CD8-positive, alpha-beta T cell (primary cell): ENCODE measurements at regions of chr1 and their contacts with region 1.

Region 1: GRCh38 chr1:8026153-8026975 is at the start of gene ERRFI1:
- DNase-seq: peak; percentile 74 to 93 (median 85)
- ATAC-seq: peak; percentile 90
- H3K4me3 ChIP-seq: peak within 1 kb of the TSS; percentile 45 to 55
- H3K4me3 Mint-ChIP-seq: peak within 1 kb of the TSS; percentile 84
- H3K27ac ChIP-seq: no peak within 1 kb of the TSS
- H3K27ac Mint-ChIP-seq: peak within 1 kb of the TSS; percentile 5
- H3K4me1 ChIP-seq: peaks cover 13% of the 10 kb centered on the region
- H3K4me1 Mint-ChIP-seq: peaks cover 12% of the 10 kb centered on the region
- H3K27me3 ChIP-seq: no peaks in the 10 kb centered on the region
- H3K27me3 Mint-ChIP-seq: peaks cover 11% of the 10 kb centered on the region
- CTCF ChIP-seq: no peak
- total RNA-seq, gene ERRFI1: 4.4 to 4.9 TPM

Region 2: GRCh38 chr1:8154621-8155052 is 128.3 kb after region 1 on chr1:
- CTCF ChIA-PET with region 1: interaction called, 3 read pairs
- POLR2A ChIA-PET with region 1: no interaction called
- intact Hi-C with region 1: loop called (anchors 5 kb)
- DNase-seq: no peak
- ATAC-seq: no peak
- H3K4me3 ChIP-seq: no peak overlapping the region
- H3K4me3 Mint-ChIP-seq: no peak overlapping the region
- H3K27ac ChIP-seq: no peak overlapping the region
- H3K27ac Mint-ChIP-seq: no peak overlapping the region
- H3K4me1 ChIP-seq: peaks cover 44% of the 10 kb centered on the region
- H3K4me1 Mint-ChIP-seq: peaks cover 45% of the 10 kb centered on the region
- H3K27me3 ChIP-seq: no peaks in the 10 kb centered on the region
- H3K27me3 Mint-ChIP-seq: peaks cover 4% of the 10 kb centered on the region
- CTCF ChIP-seq: no peak

Region 3: GRCh38 chr1:8164670-8165069 is 138.3 kb after region 1 on chr1:
- CTCF ChIA-PET with region 1: no interaction called
- POLR2A ChIA-PET with region 1: no interaction called
- intact Hi-C with region 1: no loop called
- DNase-seq: no peak
- ATAC-seq: no peak
- H3K4me3 ChIP-seq: no peak overlapping the region
- H3K4me3 Mint-ChIP-seq: no peak overlapping the region
- H3K27ac ChIP-seq: no peak overlapping the region
- H3K27ac Mint-ChIP-seq: no peak overlapping the region
- H3K4me1 ChIP-seq: peaks cover 22% of the 10 kb centered on the region
- H3K4me1 Mint-ChIP-seq: peaks cover 30% of the 10 kb centered on the region
- H3K27me3 ChIP-seq: no peaks in the 10 kb centered on the region
- H3K27me3 Mint-ChIP-seq: peaks cover 3% of the 10 kb centered on the region
- CTCF ChIP-seq: no peak

Region 4: GRCh38 chr1:8238851-8239305 is 212.5 kb after region 1 on chr1:
- CTCF ChIA-PET with region 1: interaction called, 10 read pairs
- POLR2A ChIA-PET with region 1: no interaction called
- intact Hi-C with region 1: no loop called
- DNase-seq: no peak
- ATAC-seq: no peak
- H3K4me3 ChIP-seq: no peak overlapping the region
- H3K4me3 Mint-ChIP-seq: no peak overlapping the region
- H3K27ac ChIP-seq: no peak overlapping the region
- H3K27ac Mint-ChIP-seq: no peak overlapping the region
- H3K4me1 ChIP-seq: peaks cover 3% of the 10 kb centered on the region
- H3K4me1 Mint-ChIP-seq: peaks cover 4% of the 10 kb centered on the region
- H3K27me3 ChIP-seq: no peaks in the 10 kb centered on the region
- H3K27me3 Mint-ChIP-seq: peaks cover 17% of the 10 kb centered on the region
- CTCF ChIP-seq: no peak

Region 5: DNA sequence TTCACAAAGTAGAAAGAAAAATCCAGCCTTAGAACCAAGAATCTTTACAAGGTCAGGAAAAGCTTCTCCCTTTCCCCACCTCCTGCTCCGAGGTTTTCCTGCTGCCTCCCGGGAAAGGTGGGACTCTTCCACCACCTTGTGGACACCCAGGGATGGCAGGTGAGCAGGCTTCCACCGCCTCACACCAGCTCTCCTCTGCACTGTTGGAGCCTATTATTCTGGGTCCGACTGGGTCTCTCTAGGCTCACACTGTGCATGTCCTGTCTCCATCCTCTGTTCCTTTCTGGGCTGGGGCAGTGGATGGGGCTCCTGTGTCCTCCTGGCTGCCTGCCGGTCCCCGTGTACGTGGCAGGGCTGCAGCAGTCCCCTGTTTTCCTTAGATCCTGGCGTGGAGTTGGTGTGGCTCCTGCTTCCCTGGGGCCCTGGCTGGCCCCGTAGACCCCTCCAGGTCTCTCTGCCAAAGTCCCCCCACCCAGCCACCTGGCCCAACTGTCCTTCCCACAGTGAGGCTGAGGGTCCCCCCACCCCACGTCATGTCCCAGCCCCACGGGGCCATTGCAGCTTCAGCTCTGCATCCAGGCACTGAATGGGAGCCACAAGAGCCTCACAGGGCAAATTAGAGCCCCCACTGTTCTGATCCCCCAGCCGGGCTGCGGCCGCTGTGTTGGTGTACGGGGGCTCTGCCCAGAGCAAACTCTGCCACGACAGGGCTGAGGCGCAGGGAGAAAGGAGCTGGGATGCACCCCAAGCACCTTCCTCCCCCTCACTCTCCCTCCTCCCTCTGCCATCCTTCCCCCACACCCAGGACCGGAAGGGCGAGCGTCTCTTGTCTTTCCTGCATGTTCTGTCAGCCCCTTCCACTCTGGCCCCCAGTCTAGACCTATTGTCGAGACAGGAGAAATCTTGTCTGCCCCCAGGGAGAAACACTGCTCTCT is 288.2 kb after region 1 on chr1:
- CTCF ChIA-PET with region 1: interaction called, 92 read pairs
- POLR2A ChIA-PET with region 1: no interaction called
- intact Hi-C with region 1: loop called (anchors 1 kb)
- DNase-seq: peak in 8 of 9 experiments; percentile 14 to 73 (median 53)
- ATAC-seq: no peak
- H3K4me3 ChIP-seq: no peak overlapping the region
- H3K4me3 Mint-ChIP-seq: no peak overlapping the region
- H3K27ac ChIP-seq: no peak overlapping the region
- H3K27ac Mint-ChIP-seq: no peak overlapping the region
- H3K4me1 ChIP-seq: peaks cover 20% of the 10 kb centered on the region
- H3K4me1 Mint-ChIP-seq: peaks cover 15% of the 10 kb centered on the region
- H3K27me3 ChIP-seq: peaks cover 3 to 11% of the 10 kb centered on the region in 2 experiments
- H3K27me3 Mint-ChIP-seq: peaks cover 23% of the 10 kb centered on the region
- CTCF ChIP-seq: peak; percentile 60

Region 6: GRCh38 chr1:8348777-8349491 is 322.6 kb after region 1 on chr1:
- CTCF ChIA-PET with region 1: interaction called, 76 read pairs
- POLR2A ChIA-PET with region 1: no interaction called
- intact Hi-C with region 1: loop called (anchors 1 kb)
- DNase-seq: peak; percentile 47 to 83 (median 74)
- ATAC-seq: peak; percentile 96
- H3K4me3 ChIP-seq: no peak overlapping the region
- H3K4me3 Mint-ChIP-seq: no peak overlapping the region
- H3K27ac ChIP-seq: no peak overlapping the region
- H3K27ac Mint-ChIP-seq: peak overlapping the region; percentile 70
- H3K4me1 ChIP-seq: peaks cover 3% of the 10 kb centered on the region
- H3K4me1 Mint-ChIP-seq: peaks cover 4% of the 10 kb centered on the region
- H3K27me3 ChIP-seq: no peaks in the 10 kb centered on the region
- H3K27me3 Mint-ChIP-seq: peaks cover 2% of the 10 kb centered on the region
- CTCF ChIP-seq: peak; percentile 69